ENCODE measurements at regions of chr20 and their contacts with region 1.

Region 1: GRCh38 chr20:43456809-43457639 is 672 bp upstream of the SRSF6 start:
- DNase-seq: peak; percentile 93
- CTCF ChIP-seq: no peak

Region 2: GRCh38 chr20:43506238-43506637 is 49.2 kb after region 1 on chr20:
- CTCF ChIA-PET with region 1: no interaction called
- POLR2A ChIA-PET with region 1: interaction called, 12 read pairs
- DNase-seq: no peak
- CTCF ChIP-seq: no peak

Measured in GM10248 (cell line).